Esophagus squamous epithelium (tissue), 5 donors: ENCODE measurements at regions of chr1 and their contacts with region 1.

Region 1: GRCh38 chr1:70354332-70355110 is at the start of gene ANKRD13C:
- DNase-seq: peak; percentile 71
- H3K4me3 ChIP-seq: peak within 1 kb of the TSS; percentile 72 to 94 (median 80)
- H3K27ac ChIP-seq: peak within 1 kb of the TSS; percentile 91 to 98 (median 95)
- H3K4me1 ChIP-seq: peaks cover 7 to 58% (median 26%) of the 10 kb centered on the region in 3 donors
- H3K27me3 ChIP-seq: no peaks in the 10 kb centered on the region
- CTCF ChIP-seq: no peak
- POLR2A ChIP-seq: peak in 3 of 4 donors; percentile 46 to 84 (median 82)
- total RNA-seq, gene ANKRD13C: 17.2 to 23.3 (median 17.4) TPM

Region 2: GRCh38 chr1:70247768-70248167 is 106.8 kb before region 1 on chr1:
- intact Hi-C with region 1: no loop called
- DNase-seq: no peak
- H3K4me3 ChIP-seq: no peak overlapping the region
- H3K27ac ChIP-seq: no peak overlapping the region
- H3K4me1 ChIP-seq: no peaks in the 10 kb centered on the region
- H3K27me3 ChIP-seq: no peaks in the 10 kb centered on the region
- CTCF ChIP-seq: no peak
- POLR2A ChIP-seq: no peak

Region 3: GRCh38 chr1:70410604-70411359 is 56.3 kb after region 1 on chr1 and contains the start of gene CTH:
- intact Hi-C with region 1: loop called (anchors 10 kb)
- DNase-seq: peak; percentile 71
- H3K4me3 ChIP-seq: peak within 1 kb of the TSS; percentile 46 to 88 (median 66)
- H3K27ac ChIP-seq: peak within 1 kb of the TSS; percentile 88 to 98 (median 93)
- H3K4me1 ChIP-seq: peaks cover 0 to 25% (median 13%) of the 10 kb centered on the region in 3 donors
- H3K27me3 ChIP-seq: no peaks in the 10 kb centered on the region
- CTCF ChIP-seq: no peak
- POLR2A ChIP-seq: peak in 3 of 4 donors; percentile 69 to 90 (median 90)
- total RNA-seq, gene CTH: 0.41 to 3.2 (median 1.1) TPM